ENCODE measurements at regions of chr1 and their contacts with region 1.

Region 1: GRCh38 chr1:64476251-64476952 is 6.5 kb downstream of the CACHD1 start:
- DNase-seq: peak; percentile 43
- H3K4me3 Mint-ChIP-seq: no peak overlapping the region
- H3K27ac Mint-ChIP-seq: peak overlapping the region; percentile 72
- H3K4me1 Mint-ChIP-seq: peaks cover 39% of the 10 kb centered on the region
- H3K27me3 Mint-ChIP-seq: no peaks in the 10 kb centered on the region
- CTCF ChIP-seq: no peak

Region 2: DNA sequence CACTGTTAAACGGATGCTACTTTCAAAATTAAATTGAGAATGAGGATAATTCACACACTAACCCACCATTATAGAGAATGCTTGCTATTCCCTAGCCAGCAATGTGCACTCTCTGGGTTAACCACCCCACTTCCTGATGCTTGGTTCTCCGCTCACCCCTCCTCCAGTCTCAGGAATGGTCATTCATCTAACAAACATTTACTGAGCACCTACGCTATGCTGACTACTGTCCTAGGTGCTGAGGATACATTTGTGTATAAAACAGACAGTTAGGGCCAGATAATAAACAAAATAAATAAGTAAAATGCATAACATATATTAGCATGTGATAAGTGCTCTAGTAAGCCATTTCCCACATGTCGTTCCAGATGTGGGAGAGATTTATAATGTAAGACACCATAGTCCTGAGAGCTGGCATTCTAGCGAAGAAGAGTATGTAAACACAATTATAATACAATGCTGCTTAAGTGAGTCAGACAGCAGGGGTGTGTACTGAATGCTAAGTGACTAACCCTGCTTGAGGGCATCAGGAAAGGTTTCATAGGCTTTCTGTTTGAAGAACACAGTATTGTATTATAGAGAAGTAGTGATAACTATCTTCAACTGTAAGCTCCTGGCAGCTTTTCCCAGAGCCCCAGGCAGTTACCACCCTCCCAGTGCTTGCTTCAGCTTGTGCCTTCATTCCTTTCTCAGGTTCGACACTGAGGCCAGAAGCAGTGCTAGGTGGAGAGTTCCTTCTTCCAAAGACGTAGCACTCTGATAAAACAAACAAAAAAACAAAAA is 133.1 kb before region 1 on chr1:
- CTCF ChIA-PET with region 1: no interaction called
- POLR2A ChIA-PET with region 1: interaction called, 20 read pairs
- intact Hi-C with region 1: no loop called
- DNase-seq: peak; percentile 97
- H3K4me3 Mint-ChIP-seq: peak overlapping the region; percentile 33
- H3K27ac Mint-ChIP-seq: peak overlapping the region; percentile 83
- H3K4me1 Mint-ChIP-seq: peaks cover 30% of the 10 kb centered on the region
- H3K27me3 Mint-ChIP-seq: no peaks in the 10 kb centered on the region
- CTCF ChIP-seq: no peak

Region 3: DNA sequence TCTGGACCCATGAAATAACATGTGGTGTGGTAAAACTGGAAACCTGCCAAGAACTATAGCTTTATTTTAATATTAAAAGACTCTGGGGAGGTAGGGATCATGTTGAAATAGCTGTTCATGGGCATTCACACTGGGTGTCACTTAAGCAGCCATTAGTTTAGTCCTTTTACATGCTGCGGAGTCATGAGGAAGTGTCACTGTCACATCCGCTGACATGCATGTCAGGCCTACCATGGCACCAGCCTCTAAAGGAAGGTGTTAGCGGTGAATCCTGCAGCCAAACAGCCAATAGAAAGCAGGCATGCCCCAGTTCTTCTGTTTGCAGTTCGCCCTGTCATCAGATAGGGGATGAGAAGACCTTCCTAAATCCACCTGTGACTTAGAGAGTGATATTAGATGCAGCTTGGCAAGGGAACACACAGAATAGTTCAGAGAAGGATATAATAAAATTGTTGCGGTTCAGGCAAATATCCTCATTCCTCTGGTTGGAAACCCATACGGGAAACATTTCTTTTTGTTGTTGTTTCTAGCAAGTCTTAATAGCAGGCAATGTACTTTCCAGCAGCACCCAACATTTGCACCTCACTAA is 94.0 kb after region 1 on chr1:
- CTCF ChIA-PET with region 1: no interaction called
- POLR2A ChIA-PET with region 1: no interaction called
- intact Hi-C with region 1: no loop called
- DNase-seq: no peak
- H3K4me3 Mint-ChIP-seq: no peak overlapping the region
- H3K27ac Mint-ChIP-seq: no peak overlapping the region
- H3K4me1 Mint-ChIP-seq: peaks cover 12% of the 10 kb centered on the region
- H3K27me3 Mint-ChIP-seq: no peaks in the 10 kb centered on the region
- CTCF ChIP-seq: no peak